ENCODE measurements at regions of chr17 and their contacts with region 1.

Region 1: GRCh38 chr17:15257258-15257788 is 7.8 kb downstream of the PMP22 start:
- DNase-seq: peak; percentile 85
- H3K4me3 ChIP-seq: no peak overlapping the region
- H3K27ac ChIP-seq: peak overlapping the region in 1 of 2 donors; percentile 26
- H3K4me1 ChIP-seq: peaks cover 26% of the 10 kb centered on the region
- H3K27me3 ChIP-seq: no peaks in the 10 kb centered on the region
- CTCF ChIP-seq: peak; percentile 82 to 92 (median 83)
- POLR2A ChIP-seq: no peak

Region 2: DNA sequence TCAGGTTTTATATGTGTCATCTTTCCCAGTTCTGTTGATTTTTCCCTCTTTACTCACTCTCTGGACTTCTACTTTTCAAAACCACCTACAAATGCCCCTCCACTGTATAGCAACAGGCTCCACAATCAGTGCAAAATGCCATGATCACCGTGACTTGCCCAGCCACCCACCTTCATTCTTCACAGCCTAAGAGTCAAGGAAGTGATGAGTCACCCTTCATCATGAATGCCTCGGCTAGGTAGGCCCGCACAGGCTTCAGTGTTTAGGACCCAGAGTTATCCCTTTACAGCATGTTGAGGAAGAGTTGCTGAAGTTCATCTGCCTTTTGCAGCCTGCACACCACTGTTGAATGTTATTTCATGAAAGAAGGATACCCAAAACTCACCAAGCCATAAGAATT is 150.8 kb before region 1 on chr17:
- intact Hi-C with region 1: no loop called
- DNase-seq: no peak
- H3K4me3 ChIP-seq: no peak overlapping the region
- H3K27ac ChIP-seq: no peak overlapping the region
- H3K4me1 ChIP-seq: no peaks in the 10 kb centered on the region
- H3K27me3 ChIP-seq: no peaks in the 10 kb centered on the region
- CTCF ChIP-seq: no peak
- POLR2A ChIP-seq: no peak

Region 3: GRCh38 chr17:15123593-15124263 is 133.6 kb before region 1 on chr17:
- intact Hi-C with region 1: no loop called
- DNase-seq: no peak
- H3K4me3 ChIP-seq: no peak overlapping the region
- H3K27ac ChIP-seq: no peak overlapping the region
- H3K4me1 ChIP-seq: no peaks in the 10 kb centered on the region
- H3K27me3 ChIP-seq: no peaks in the 10 kb centered on the region
- CTCF ChIP-seq: no peak
- POLR2A ChIP-seq: no peak

Region 4: GRCh38 chr17:15289285-15290185 is 32.2 kb after region 1 on chr17:
- intact Hi-C with region 1: no loop called
- DNase-seq: peak; percentile 42
- H3K4me3 ChIP-seq: peak overlapping the region in 1 of 2 donors; percentile 18
- H3K27ac ChIP-seq: no peak overlapping the region
- H3K4me1 ChIP-seq: peaks cover 10% of the 10 kb centered on the region
- H3K27me3 ChIP-seq: no peaks in the 10 kb centered on the region
- CTCF ChIP-seq: no peak
- POLR2A ChIP-seq: no peak

Region 5: GRCh38 chr17:15502369-15503112 is 245.2 kb after region 1 on chr17:
- intact Hi-C with region 1: loop called (anchors 5 kb)
- DNase-seq: peak; percentile 95
- H3K4me3 ChIP-seq: peak overlapping the region; percentile 22
- H3K27ac ChIP-seq: peak overlapping the region; percentile 55 to 70
- H3K4me1 ChIP-seq: peaks cover 9% of the 10 kb centered on the region
- H3K27me3 ChIP-seq: no peaks in the 10 kb centered on the region
- CTCF ChIP-seq: peak; percentile 77 to 83 (median 80)
- POLR2A ChIP-seq: no peak

Measured in testis (tissue), 5 donors.